Panc1 (cell line): ENCODE measurements at regions of chr12 and their contacts with region 1.

Region 1: GRCh38 chr12:116880817-116881324 is 370 bp downstream of the HRK start:
- DNase-seq: no peak
- ATAC-seq: peak; percentile 88
- H3K4me3 ChIP-seq: peak overlapping the region; percentile 39 to 59
- H3K27ac ChIP-seq: no peak overlapping the region
- H3K4me1 ChIP-seq: peaks cover 18% of the 10 kb centered on the region
- H3K27me3 ChIP-seq: peaks cover 30% of the 10 kb centered on the region
- CTCF ChIP-seq: peak; percentile 66

Region 2: DNA sequence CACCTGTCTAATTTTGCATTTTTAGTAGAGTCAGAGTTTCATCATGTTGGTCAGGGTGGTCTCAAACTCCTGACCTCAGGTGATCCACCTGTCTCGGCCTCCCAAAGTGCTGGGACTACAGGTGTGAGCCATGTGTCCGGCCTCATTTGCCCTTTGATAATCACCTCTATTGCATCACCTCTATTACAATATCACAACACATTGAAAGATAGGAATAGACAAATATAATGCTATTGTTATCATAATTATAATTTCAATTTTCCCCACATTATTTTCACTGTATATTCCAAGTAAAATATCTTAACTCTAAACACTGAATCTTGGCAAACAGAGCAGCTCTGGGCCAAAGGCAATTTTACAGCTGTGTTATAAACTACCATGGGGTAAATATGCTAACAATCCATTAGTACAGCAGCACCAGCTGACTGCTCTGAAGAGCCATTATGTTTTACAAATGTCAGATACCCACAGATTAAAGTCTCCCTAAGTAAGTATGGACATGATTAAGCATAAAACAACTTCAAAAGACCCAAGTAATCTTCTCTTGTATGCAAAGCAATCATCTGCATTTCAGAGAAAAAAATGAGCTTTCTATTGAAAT is 776.6 kb before region 1 on chr12:
- CTCF ChIA-PET with region 1: no interaction called
- POLR2A ChIA-PET with region 1: no interaction called
- in situ Hi-C with region 1: no loop called
- intact Hi-C with region 1: no loop called
- DNase-seq: no peak
- ATAC-seq: no peak
- H3K4me3 ChIP-seq: no peak overlapping the region
- H3K27ac ChIP-seq: no peak overlapping the region
- H3K4me1 ChIP-seq: no peaks in the 10 kb centered on the region; the same call in 1 of the 2 replicates
- H3K27me3 ChIP-seq: no peaks in the 10 kb centered on the region
- CTCF ChIP-seq: no peak

Region 3: GRCh38 chr12:116737774-116738700 is 142.8 kb before region 1 on chr12 and contains the starts of genes RNFT2 and SPRING1:
- CTCF ChIA-PET with region 1: no interaction called
- POLR2A ChIA-PET with region 1: no interaction called
- in situ Hi-C with region 1: no loop called
- intact Hi-C with region 1: loop called (anchors 10 kb)
- DNase-seq: peak; percentile 92
- ATAC-seq: peak; percentile 99
- H3K4me3 ChIP-seq: peak within 1 kb of the TSS; percentile 90 to 92
- H3K27ac ChIP-seq: peak within 1 kb of the TSS; percentile 74
- H3K4me1 ChIP-seq: peaks cover 17% of the 10 kb centered on the region
- H3K27me3 ChIP-seq: no peaks in the 10 kb centered on the region
- CTCF ChIP-seq: no peak
- total RNA-seq, gene RNFT2: 12.3 TPM
- total RNA-seq, gene SPRING1: 71.1 TPM

Region 4: DNA sequence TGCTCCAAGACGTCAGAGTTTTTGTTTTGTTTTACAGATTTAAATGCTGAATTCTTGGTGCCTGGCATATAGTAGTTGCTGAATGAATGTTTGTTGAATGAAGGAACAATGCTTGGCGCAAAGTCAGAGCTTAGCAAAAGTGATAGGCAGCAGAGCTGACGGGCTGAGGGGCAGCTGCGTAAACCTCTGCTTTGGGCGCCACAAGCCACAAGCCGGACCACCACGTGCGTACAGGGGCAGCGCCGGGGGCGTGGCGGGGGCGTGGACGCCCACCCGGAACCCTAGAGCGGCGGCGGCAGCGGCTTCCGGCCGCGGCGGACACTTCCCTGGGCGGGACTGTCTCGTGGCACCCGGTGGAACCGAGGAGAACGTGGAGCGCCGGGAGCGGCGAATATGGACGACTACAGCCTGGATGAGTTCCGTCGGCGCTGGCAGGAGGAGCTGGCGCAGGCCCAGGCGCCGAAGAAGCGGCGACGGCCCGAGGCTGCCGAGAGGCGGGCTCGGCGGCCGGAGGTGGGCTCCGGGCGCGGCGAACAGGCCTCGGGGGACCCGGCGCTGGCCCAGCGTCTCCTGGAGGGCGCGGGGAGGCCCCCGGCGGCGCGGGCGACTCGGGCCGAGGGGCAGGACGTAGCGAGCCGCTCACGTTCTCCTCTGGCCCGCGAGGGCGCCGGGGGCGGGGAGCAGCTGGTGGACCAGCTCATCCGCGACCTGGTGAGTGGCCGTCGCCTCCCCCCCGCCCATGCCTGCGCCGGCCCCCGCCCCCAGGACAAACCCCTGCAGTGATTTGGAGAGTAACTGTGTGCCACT is 30.0 kb after region 1 on chr12 and contains the start of gene FBXW8:
- CTCF ChIA-PET with region 1: no interaction called
- POLR2A ChIA-PET with region 1: interaction called, 12 read pairs
- in situ Hi-C with region 1: no loop called
- intact Hi-C with region 1: no loop called
- DNase-seq: no peak
- ATAC-seq: peak; percentile 99
- H3K4me3 ChIP-seq: peak within 1 kb of the TSS; percentile 76 to 82
- H3K27ac ChIP-seq: peak within 1 kb of the TSS; percentile 93
- H3K4me1 ChIP-seq: peaks cover 7% of the 10 kb centered on the region
- H3K27me3 ChIP-seq: no peaks in the 10 kb centered on the region
- CTCF ChIP-seq: no peak
- total RNA-seq, gene FBXW8: 18.0 TPM